Activated T-helper 1 cell treated with anti-CD3 and anti-CD28 coated beads, Interleukin-12 subunit alpha, Interleukin-12 subunit beta, Interleukin-2, Interleukin-4 antibody, amounts not matched to agents 30 ng/mL and 10 ng/mL and 1 ng/mL, durations not matched to agents 14 hours and 24 hours and 36 hours (primary cell): ENCODE measurements at regions of chr16 and their contacts with region 1.

Region 1: DNA sequence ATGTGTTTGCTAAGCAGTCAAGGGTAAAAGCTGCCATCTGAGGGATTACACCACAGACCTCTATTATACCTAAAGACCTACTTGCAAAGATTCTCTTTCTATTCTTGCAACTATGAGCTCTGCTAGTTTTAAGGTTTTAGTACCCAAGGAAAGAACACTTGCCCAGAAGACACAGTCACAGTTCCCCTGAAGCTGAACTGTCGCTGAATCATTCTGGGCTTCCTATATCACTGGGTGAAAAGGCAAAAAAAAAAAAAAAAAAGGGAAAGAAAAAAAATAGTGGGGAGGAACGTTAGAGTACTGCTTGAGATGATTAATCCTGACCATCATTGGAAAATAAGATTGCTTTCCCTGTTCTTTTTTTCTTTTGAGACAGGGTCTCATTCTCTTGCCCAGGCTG is 37.9 kb downstream of the LYRM1 start:
- DNase-seq: no peak
- H3K4me3 Mint-ChIP-seq: no peak overlapping the region
- H3K27ac Mint-ChIP-seq: peak overlapping the region; percentile 78
- H3K4me1 Mint-ChIP-seq: peaks cover 37% of the 10 kb centered on the region
- H3K27me3 Mint-ChIP-seq: no peaks in the 10 kb centered on the region

Region 2: GRCh38 chr16:20849587-20850390 is 88.6 kb before region 1 on chr16:
- intact Hi-C with region 1: no loop called
- DNase-seq: peak; percentile 40
- H3K4me3 Mint-ChIP-seq: no peak overlapping the region
- H3K27ac Mint-ChIP-seq: no peak overlapping the region
- H3K4me1 Mint-ChIP-seq: peaks cover 31% of the 10 kb centered on the region
- H3K27me3 Mint-ChIP-seq: no peaks in the 10 kb centered on the region

Region 3: GRCh38 chr16:20889625-20890275 is 48.7 kb before region 1 on chr16:
- intact Hi-C with region 1: no loop called
- DNase-seq: no peak
- H3K4me3 Mint-ChIP-seq: no peak overlapping the region
- H3K27ac Mint-ChIP-seq: no peak overlapping the region
- H3K4me1 Mint-ChIP-seq: peaks cover 13% of the 10 kb centered on the region
- H3K27me3 Mint-ChIP-seq: no peaks in the 10 kb centered on the region

Region 4: DNA sequence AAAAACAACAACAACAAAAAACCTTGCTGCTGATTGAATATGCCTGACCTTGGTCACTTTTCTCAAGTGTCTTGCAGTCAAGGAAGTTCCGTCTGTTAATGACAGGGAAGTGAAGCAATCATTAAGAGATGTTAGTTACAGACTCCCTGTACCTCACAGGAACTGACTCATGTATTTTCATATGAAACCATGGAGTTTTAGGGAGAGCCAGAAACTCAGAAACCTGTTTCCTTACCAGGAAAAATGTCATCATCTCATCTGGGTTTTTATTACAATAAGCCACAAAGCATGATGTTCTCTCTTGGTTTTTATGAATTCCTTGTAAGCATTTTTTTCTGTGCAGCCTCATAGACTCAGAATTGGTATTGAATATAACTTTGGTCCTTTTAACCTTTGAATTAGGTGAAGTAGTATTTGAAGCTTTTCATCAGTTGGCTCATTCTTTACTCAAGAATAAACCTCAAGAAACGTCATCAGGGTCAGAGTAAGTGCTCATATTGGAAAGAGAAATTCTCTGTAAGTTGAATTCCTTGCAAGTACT is 27.6 kb before region 1 on chr16:
- intact Hi-C with region 1: loop called (anchors 2 kb)
- DNase-seq: no peak
- H3K4me3 Mint-ChIP-seq: peak overlapping the region; percentile 6
- H3K27ac Mint-ChIP-seq: peak overlapping the region; percentile 78
- H3K4me1 Mint-ChIP-seq: peaks cover 54% of the 10 kb centered on the region
- H3K27me3 Mint-ChIP-seq: no peaks in the 10 kb centered on the region